ENCODE measurements at regions of chr20 and their contacts with region 1.

Region 1: DNA sequence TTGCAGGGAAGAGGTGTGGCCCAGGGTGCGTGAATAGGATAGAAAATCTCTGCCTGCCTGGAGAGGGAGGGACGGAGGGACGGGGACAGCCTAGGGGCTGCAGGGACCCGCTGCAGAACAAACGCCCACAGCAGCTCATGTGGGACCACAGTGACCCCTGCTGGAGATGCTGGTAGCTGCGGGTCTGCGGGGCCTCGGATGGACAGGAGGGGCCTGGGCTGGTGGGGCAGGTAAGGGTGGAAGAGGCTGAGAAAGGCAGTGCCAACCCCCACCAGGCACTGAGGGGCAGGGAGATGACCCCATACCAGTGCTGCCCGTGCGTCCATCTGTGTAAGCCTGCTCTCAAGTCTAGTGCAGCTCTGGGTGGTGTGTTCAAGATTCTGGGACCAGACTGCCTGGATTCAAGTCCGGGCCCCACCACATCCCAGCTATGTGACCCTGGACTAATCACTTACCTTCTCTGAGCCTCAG is 39.4 kb downstream of the KIAA1755 start:
- DNase-seq: peak; percentile 43 to 82 (median 69)
- H3K4me3 ChIP-seq: no peak overlapping the region
- H3K27ac ChIP-seq: no peak overlapping the region
- H3K4me1 ChIP-seq: peaks cover 2% of the 10 kb centered on the region
- H3K27me3 ChIP-seq: no peaks in the 10 kb centered on the region
- CTCF ChIP-seq: peak; percentile 31 to 77 (median 68)
- EP300 ChIP-seq: no peak
- POLR2A ChIP-seq: no peak

Region 2: DNA sequence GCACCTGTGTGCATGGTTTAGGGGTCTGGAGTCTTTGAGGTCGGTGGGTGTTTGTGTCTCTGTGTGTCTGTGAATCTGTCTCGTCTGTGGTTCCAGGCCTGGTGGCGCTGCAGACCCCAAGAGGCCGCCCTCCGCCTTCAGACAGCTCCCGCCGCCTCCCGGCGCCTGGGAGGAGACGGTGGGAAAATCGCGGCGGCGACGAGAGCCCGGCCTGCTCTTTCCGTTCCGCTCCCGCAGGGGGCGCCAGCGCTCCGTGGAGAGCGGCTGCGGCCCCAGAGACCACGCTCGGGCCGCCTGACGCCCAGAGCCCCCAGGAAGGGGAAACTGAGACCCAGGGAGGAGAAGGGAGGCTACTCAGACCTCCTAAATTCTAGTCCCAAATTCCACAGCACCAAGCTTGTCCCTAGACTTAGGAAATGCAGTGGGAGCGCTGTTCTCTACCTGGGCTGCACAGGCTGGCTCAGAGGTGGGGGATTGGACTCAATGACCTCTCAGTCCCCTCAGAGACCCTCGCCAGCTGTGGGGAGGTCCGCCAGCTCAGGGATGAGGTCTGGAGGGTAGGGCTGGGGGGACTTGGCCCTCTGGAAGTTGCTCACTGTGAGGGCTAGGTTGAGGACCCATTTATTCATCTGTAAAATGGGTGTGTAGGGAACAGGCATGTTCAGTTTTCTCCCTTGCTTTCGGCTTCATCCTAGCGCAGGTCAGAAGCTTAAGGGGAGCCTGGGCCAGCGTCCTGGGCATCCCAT is 656.6 kb before region 1 on chr20:
- intact Hi-C with region 1: loop called in 2 of 4 experiments (anchors 5 to 10 kb)
- DNase-seq: peak in 4 of 5 donors; percentile 21 to 71 (median 43)
- H3K4me3 ChIP-seq: no peak overlapping the region
- H3K27ac ChIP-seq: no peak overlapping the region
- H3K4me1 ChIP-seq: no peaks in the 10 kb centered on the region
- H3K27me3 ChIP-seq: no peaks in the 10 kb centered on the region
- CTCF ChIP-seq: peak; percentile 56 to 67 (median 63)
- EP300 ChIP-seq: no peak
- POLR2A ChIP-seq: no peak

Region 3: DNA sequence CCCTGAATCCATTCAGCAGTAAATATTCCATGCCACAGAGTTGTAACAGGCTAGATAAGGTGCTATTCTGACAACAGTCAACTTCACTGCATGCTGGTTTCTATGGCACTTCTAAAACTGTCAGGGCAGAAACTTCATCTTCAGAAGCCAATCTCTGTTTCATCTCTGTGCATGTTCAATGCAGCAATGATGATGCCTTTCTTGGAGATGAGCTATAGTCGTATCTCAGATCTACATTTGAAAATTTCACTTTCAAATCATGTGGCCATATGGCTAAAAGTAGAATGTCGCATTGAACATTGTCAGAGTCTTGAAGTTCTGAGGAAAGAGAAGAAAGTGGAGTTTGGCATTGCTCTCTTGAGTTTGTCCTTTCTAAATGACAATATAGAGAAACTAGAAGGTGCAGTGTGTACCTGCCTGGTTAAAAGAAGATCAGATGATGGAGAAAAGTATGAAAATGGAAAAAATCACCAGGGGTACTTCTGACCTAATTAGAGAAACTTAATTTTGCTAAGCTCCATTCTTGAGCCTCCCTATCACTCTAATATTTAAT is 367.3 kb before region 1 on chr20:
- intact Hi-C with region 1: no loop called
- DNase-seq: no peak
- H3K4me3 ChIP-seq: no peak overlapping the region
- H3K27ac ChIP-seq: no peak overlapping the region
- H3K4me1 ChIP-seq: no peaks in the 10 kb centered on the region
- H3K27me3 ChIP-seq: no peaks in the 10 kb centered on the region
- CTCF ChIP-seq: no peak
- EP300 ChIP-seq: no peak
- POLR2A ChIP-seq: no peak

Region 4: DNA sequence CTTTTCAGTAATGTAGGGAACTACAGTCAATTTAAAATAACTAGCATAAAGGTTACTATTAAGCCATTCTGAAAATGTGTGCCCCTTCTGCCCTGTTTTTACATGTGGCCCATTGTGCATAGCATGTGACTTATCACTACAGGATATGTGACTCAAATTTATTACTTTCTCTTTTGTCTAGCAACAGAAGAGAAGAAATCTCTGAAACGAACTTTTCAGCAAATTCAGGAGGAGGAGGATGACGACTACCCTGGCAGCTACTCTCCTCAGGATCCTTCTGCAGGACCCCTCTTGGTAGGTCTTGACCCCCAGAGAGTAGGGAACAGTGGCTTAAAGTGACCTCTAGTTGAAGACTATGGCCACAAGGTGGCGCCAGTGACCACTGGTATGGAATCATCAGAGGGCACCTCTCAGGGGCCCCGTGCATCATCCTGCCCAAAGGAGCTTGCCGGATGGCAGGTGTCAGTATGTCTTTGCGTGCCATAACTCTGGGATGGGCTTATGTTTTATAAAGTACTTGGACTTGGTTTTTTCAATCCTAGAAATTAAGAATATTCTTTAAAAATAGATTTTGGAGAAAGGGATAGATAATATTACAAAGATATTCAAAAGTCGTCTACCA is 163.7 kb before region 1 on chr20:
- intact Hi-C with region 1: loop called (anchors 1 to 5 kb)
- DNase-seq: peak; percentile 74 to 89 (median 86)
- H3K4me3 ChIP-seq: no peak overlapping the region
- H3K27ac ChIP-seq: no peak overlapping the region
- H3K4me1 ChIP-seq: no peaks in the 10 kb centered on the region
- H3K27me3 ChIP-seq: no peaks in the 10 kb centered on the region
- CTCF ChIP-seq: peak; percentile 72 to 83 (median 77)
- EP300 ChIP-seq: no peak
- POLR2A ChIP-seq: no peak

Region 5: DNA sequence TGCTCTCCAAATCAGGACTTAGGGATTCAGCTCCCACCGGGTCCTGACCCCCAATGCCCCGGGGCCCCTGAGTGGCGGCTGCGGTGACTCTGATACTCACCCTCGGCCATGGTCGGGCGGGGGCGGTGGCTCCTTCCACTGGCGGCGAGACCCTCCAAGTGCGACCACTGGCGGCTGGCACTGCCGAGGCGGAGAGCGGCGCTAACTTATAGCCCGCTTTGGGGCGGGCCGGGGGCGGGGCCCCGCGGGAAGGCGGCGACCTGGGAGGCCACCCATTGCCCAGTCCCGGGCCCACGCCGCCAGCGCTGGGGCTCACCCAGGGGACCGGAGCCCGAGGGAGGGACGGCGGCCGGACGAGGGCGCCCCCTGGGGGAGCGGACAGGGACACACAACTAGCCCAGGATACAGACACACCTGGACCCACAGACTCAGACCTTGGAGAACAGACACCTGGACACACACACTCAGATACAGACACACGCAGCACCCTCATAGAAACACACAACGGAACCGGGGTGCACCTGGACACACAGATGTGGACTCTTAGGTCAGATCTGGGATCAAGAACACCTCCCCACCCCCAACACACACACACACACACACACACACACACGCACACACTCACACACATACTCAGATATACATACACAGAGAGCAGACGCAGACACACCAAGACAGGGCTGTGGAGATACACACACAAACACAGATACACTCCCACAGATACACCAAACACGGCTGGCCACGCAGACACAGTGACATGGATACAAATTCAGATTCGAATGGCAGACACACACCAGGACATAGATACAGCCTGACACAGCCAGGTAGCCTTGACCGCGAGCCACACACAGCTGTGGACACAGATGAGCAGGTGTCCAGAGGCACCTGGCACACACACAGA is 55.8 kb before region 1 on chr20 and contains the start of gene TGM2:
- intact Hi-C with region 1: loop called in 1 of 4 experiments (anchors 5 kb)
- DNase-seq: peak; percentile 70 to 84 (median 71)
- H3K4me3 ChIP-seq: peak within 1 kb of the TSS; percentile 40
- H3K27ac ChIP-seq: peak within 1 kb of the TSS in 1 of 2 donors; percentile 22
- H3K4me1 ChIP-seq: peaks cover 13% of the 10 kb centered on the region
- H3K27me3 ChIP-seq: no peaks in the 10 kb centered on the region
- CTCF ChIP-seq: peak; percentile 83 to 84 (median 83)
- EP300 ChIP-seq: no peak
- POLR2A ChIP-seq: no peak
- total RNA-seq, gene TGM2: 15.0 to 320 (median 52.8) TPM

Region 6: GRCh38 chr20:38315290-38315966 is 94.3 kb after region 1 on chr20:
- intact Hi-C with region 1: loop called in 3 of 4 experiments (anchors 5 to 10 kb)
- DNase-seq: peak in 4 of 5 donors; percentile 30 to 50 (median 41)
- H3K4me3 ChIP-seq: no peak overlapping the region
- H3K27ac ChIP-seq: no peak overlapping the region
- H3K4me1 ChIP-seq: no peaks in the 10 kb centered on the region
- H3K27me3 ChIP-seq: no peaks in the 10 kb centered on the region
- CTCF ChIP-seq: peak in 1 of 3 donors; percentile 26
- EP300 ChIP-seq: no peak
- POLR2A ChIP-seq: no peak

Region 7: DNA sequence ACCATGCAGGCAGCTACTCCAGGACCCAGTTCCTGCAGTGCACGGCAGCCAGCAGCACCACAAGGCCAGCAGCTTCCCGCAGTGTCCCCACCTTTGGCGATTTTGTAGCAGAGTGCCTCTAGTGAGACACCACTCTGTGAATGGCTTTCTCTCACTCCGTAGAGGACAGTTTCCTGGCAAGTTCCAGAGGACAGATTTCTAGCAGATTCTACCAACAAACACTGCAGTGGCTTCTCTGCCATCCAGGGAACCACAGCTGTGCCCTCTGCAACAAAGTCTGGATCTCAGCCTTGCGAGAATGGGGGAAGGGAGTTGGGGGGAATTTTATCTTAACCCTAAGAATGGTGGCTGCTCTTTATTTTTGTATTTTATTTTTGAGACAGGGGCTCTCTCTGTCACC is 185.3 kb after region 1 on chr20:
- intact Hi-C with region 1: loop called in 1 of 4 experiments (anchors 5 kb)
- DNase-seq: no peak
- H3K4me3 ChIP-seq: no peak overlapping the region
- H3K27ac ChIP-seq: no peak overlapping the region
- H3K4me1 ChIP-seq: peaks cover 1% of the 10 kb centered on the region
- H3K27me3 ChIP-seq: no peaks in the 10 kb centered on the region
- CTCF ChIP-seq: no peak
- EP300 ChIP-seq: no peak
- POLR2A ChIP-seq: no peak